GM10248 (cell line): ENCODE measurements at regions of chr13 and their contacts with region 1.

Region 1: DNA sequence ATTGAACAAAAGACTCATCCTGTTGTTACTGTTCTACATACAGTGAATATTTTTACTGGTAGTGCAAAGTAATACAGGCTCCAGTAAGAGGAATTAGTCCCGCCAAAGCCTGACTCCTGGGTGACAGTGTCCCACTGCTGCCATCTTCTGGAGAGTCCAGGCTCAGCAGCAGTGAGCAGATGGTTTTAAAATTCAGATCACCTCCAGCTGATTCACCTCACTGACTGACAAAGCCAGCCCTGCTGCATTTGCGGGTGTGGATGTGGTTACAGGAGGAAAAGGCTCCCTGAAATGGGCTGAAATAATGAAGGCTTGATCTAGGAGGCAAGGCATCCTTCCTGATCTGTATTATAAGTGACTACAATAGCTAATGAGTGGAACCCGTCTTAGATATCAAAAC is 18.3 kb downstream of the PABPC3 start:
- DNase-seq: peak; percentile 79
- CTCF ChIP-seq: peak; percentile 96

Region 2: GRCh38 chr13:24473686-24474085 is 640.5 kb before region 1 on chr13:
- CTCF ChIA-PET with region 1: no interaction called
- POLR2A ChIA-PET with region 1: no interaction called
- DNase-seq: no peak
- CTCF ChIP-seq: no peak

Region 3: GRCh38 chr13:25001476-25002206 is 112.6 kb before region 1 on chr13:
- CTCF ChIA-PET with region 1: interaction called, 18 read pairs
- POLR2A ChIA-PET with region 1: no interaction called
- DNase-seq: no peak
- CTCF ChIP-seq: no peak

Region 4: DNA sequence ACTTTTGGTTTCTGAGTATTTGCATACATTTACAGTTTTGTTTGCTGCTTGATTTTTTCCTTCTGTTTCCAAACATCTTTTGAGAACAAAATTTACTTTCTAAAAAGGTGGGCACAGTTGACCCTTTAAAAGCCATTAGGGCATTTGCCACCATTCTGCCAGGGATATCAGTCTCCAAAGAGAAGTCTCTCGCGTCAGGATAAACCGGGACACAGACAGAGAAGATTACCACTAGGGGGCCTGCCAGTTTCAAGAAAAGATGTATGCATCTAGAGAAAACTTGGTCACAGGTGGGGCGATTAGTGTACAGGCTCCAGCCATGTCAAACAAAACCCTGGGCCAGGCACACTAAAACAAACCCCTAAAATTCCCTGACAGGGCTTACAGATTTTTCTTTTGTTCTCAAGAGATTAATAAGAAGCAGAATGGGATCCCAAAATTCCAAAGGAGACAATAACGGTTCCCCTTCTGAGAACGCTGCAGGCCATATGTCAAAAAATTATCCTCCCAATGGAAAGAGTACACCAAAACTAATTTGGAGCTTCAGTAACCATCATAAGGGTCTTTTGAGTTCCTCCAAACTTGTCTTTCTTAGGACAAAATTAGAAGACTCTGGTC is 29.0 kb before region 1 on chr13:
- CTCF ChIA-PET with region 1: interaction called, 41 read pairs
- POLR2A ChIA-PET with region 1: no interaction called
- DNase-seq: peak; percentile 56
- CTCF ChIP-seq: peak; percentile 70

Region 5: GRCh38 chr13:25132751-25133390 is 18.7 kb after region 1 on chr13:
- CTCF ChIA-PET with region 1: interaction called, 25 read pairs
- POLR2A ChIA-PET with region 1: no interaction called
- DNase-seq: no peak
- CTCF ChIP-seq: no peak

Region 6: GRCh38 chr13:25190256-25190655 is 76.0 kb after region 1 on chr13:
- CTCF ChIA-PET with region 1: interaction called, 11 read pairs
- POLR2A ChIA-PET with region 1: no interaction called
- DNase-seq: no peak
- CTCF ChIP-seq: no peak

Region 7: DNA sequence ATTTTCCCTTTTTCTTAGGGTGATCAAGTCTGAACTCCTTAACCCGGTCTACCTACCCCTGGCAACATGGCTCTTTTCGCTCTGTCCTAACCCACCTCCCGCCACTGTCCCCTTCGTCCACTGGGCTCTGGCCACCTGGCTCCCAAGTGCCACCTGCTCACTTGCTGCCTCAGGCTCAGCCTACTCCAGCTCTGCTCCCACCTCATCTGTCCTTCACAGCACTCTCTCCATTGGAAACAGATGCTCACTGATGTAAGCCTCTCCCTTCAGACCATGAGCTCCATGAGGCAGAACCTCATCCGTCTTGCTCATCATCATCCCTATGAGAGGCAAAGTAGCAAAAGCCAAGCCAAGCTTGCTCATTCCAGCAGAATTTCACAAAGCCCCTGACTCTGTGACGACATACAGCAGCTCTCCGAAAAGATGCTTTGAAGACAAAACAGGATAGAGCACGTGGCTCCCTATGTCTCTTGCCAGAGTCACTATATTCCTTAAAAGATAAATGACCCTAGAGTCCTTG is 93.1 kb after region 1 on chr13:
- CTCF ChIA-PET with region 1: no interaction called
- POLR2A ChIA-PET with region 1: no interaction called
- DNase-seq: no peak
- CTCF ChIP-seq: no peak